MCF 10A (cell line): ENCODE measurements at regions of chr21 and their contacts with region 1.

Region 1: DNA sequence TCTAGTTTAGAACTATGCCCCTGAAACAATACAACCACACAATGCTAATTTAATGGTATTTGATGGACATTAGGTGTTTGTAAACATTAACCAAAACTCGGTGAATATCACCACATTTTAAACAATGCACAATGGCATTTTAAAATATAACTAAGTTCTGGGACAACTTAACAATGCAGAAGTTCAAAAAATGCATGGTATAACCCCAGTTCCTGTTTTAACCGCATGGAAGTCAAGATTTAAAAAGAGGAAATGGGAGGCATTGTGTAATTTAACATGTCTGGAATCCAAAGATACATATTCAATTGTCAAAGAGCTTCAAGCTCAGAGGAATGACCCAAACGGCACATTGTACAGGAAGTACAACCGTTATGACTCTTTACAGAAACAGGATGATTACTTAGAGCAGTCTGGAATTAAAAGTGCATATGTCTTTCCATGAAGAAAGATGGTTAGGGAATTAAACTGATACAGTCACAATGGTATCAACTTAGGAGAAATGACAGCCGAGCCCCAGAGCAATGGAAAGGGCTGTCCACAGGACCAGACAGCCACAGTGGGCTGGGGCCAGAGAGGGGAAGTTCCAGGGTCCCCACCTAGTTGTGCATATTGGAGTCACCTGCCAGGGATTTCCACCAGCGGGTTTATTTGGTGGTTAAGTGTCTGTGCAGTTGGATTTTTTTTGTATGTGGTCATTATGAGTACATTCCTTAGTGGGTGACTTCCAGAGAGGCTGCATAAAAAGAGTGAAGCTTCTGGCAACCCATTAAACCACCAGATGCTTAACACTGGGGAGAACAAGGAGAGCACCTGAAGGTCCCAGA is 7.5 kb upstream of the PTTG1IP start:
- DNase-seq: peak; percentile 18
- H3K4me3 Mint-ChIP-seq: no peak overlapping the region
- H3K27ac Mint-ChIP-seq: peak overlapping the region; percentile 98
- H3K4me1 Mint-ChIP-seq: peaks cover 32% of the 10 kb centered on the region
- H3K27me3 Mint-ChIP-seq: no peaks in the 10 kb centered on the region
- CTCF ChIP-seq: no peak

Region 2: GRCh38 chr21:44892536-44893277 is 11.7 kb after region 1 on chr21:
- CTCF ChIA-PET with region 1: interaction called, 25 read pairs
- POLR2A ChIA-PET with region 1: interaction called, 4 read pairs
- intact Hi-C with region 1: no loop called
- DNase-seq: peak; percentile 70
- H3K4me3 Mint-ChIP-seq: no peak overlapping the region
- H3K27ac Mint-ChIP-seq: no peak overlapping the region
- H3K4me1 Mint-ChIP-seq: peaks cover 6% of the 10 kb centered on the region
- H3K27me3 Mint-ChIP-seq: no peaks in the 10 kb centered on the region
- CTCF ChIP-seq: peak; percentile 84

Region 3: GRCh38 chr21:44911389-44912157 is 30.6 kb after region 1 on chr21:
- CTCF ChIA-PET with region 1: interaction called, 9 read pairs
- POLR2A ChIA-PET with region 1: interaction called, 23 read pairs
- intact Hi-C with region 1: loop called (anchors 1 kb)
- DNase-seq: peak; percentile 93
- H3K4me3 Mint-ChIP-seq: peak overlapping the region; percentile 42
- H3K27ac Mint-ChIP-seq: peak overlapping the region; percentile 1
- H3K4me1 Mint-ChIP-seq: peaks cover 37% of the 10 kb centered on the region
- H3K27me3 Mint-ChIP-seq: no peaks in the 10 kb centered on the region
- CTCF ChIP-seq: peak; percentile 87

Region 4: DNA sequence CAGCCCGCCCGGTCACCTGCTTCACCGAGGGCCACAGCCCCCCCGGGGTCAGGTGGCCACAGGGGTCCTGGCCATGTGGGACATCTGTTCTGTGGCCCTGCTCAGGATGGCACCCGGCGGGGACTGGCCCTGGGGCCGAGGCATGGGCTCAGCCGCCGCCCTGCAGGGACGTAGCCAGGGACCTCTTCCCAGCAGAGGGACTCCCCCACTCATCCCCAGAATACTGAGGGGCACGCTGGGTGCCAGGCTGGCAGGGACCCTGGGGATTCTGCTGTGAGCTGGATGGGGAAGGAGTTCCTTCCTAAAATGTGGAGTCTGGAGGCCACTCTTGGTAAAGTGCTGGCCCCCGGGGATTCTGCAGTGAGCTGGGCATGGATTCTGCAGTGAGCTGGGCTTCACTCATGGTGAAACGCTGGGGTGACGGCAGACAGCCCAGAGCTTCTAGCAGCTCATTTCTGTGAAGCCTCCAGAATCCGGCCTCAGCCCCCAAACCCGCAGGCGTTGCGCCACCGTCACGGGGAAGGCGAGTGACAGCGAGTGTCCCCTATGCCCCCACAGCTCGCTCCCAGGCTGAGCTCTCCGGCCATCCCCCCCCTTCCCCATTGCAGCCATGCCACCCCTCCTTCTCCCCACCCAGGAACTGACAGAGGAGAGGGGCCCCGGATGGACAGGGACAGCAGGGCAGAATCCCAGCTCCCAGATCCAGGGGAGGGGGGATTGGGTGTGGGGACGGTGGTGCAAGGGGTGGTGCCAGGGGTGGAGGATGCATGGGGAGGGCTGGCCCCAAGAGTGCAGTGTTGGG is 38.3 kb after region 1 on chr21:
- CTCF ChIA-PET with region 1: interaction called, 4 read pairs
- POLR2A ChIA-PET with region 1: interaction called, 16 read pairs
- intact Hi-C with region 1: no loop called
- DNase-seq: no peak
- H3K4me3 Mint-ChIP-seq: no peak overlapping the region
- H3K27ac Mint-ChIP-seq: no peak overlapping the region
- H3K4me1 Mint-ChIP-seq: peaks cover 30% of the 10 kb centered on the region
- H3K27me3 Mint-ChIP-seq: no peaks in the 10 kb centered on the region
- CTCF ChIP-seq: no peak